ENCODE measurements at regions of chr19 and their contacts with region 1.

Region 1: DNA sequence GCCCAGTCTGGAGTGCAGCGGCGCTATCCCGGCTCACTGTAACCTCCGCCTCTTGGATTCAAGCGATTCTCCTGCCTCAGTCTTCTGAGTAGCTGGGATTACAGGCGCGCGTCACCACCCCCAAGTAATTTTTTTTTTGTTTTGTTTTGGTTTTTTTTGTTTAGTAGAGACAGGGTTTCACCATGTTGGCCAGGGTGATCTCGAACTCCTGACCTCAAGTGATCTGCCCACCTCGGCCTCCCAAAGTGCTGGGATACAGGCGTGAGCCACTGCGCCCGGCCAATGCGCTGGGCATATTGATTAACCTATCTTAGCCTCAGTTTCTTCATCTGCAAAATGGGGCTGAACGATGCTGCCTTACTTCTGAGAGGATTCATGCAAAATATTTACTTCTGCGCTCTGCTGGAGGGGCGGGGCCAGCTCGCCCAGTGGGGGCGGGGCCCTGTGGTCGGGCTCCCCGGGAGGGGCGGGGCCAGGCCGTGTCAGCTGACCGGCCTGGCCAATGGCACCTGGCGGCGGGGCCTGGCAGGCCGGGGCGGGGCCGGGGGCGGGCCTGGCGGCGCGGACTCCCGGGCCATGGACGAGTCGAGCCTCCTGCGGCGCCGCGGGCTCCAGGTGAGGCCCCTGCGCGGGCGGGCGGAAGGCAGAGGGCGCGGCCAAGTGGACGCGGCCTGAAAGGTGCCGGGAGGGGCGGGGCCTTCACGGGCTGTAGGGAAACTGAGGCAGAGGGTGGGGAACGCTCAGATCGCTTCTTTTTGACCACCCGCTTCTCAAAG is at the start of gene MAST3:
- DNase-seq: peak; percentile 96
- H3K4me3 ChIP-seq: peak within 1 kb of the TSS; percentile 77
- H3K27ac ChIP-seq: peak within 1 kb of the TSS; percentile 90
- H3K4me1 ChIP-seq: peaks cover 61% of the 10 kb centered on the region
- CTCF ChIP-seq: no peak
- total RNA-seq, gene MAST3: 14.3 and 14.8 TPM in 2 replicates

Region 2: GRCh38 chr19:17755977-17756670 is 341.3 kb before region 1 on chr19:
- CTCF ChIA-PET with region 1: no interaction called
- POLR2A ChIA-PET with region 1: no interaction called
- intact Hi-C with region 1: loop called (anchors 5 kb)
- DNase-seq: peak; percentile 91
- H3K4me3 ChIP-seq: peak overlapping the region; percentile 54
- H3K27ac ChIP-seq: peak overlapping the region; percentile 93
- H3K4me1 ChIP-seq: peaks cover 70% of the 10 kb centered on the region
- CTCF ChIP-seq: no peak

Region 3: DNA sequence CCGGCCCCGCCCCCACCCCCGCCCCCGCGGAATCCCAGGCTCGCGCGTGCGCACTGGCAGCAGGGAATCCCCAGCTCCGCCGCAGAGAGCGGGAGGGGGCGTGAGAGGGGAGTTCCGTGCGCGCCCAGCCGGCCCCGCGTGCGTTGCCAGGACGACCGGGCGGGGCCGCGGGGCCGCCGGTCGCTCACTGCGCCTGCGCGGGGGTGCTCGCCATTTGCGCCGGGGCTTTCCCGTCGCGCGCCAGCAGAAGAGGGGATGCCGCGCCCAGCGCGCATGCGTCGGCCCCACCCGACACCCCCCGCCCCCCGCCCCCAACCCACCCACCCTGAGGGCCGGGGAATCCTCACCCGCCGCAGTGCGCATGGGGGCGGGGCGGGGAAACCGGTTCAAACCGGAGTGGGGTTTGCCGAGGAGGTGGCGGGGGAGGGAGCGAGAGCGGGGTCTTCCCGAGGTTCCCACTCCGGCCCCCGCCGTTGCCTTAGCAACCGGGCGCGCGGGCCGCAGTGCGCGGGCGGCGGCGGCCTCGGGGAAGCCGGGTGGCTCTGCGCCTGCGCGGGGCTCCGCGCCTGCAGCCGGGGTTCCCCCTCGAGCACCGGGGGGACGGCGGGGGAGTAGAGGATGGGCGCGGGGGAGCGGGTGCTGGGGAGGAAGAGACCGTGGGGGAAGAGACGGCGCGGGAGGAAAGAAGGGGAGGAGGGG is 149.4 kb before region 1 on chr19:
- CTCF ChIA-PET with region 1: no interaction called
- POLR2A ChIA-PET with region 1: no interaction called
- intact Hi-C with region 1: loop called (anchors 10 kb)
- DNase-seq: peak; percentile 98
- H3K4me3 ChIP-seq: peak overlapping the region; percentile 65
- H3K27ac ChIP-seq: peak overlapping the region; percentile 25
- H3K4me1 ChIP-seq: peaks cover 42% of the 10 kb centered on the region
- CTCF ChIP-seq: no peak

Region 4: GRCh38 chr19:18317918-18318841 is 220.8 kb after region 1 on chr19:
- CTCF ChIA-PET with region 1: no interaction called
- POLR2A ChIA-PET with region 1: no interaction called
- intact Hi-C with region 1: no loop called
- DNase-seq: no peak
- H3K4me3 ChIP-seq: no peak overlapping the region
- H3K27ac ChIP-seq: no peak overlapping the region
- H3K4me1 ChIP-seq: peaks cover 29% of the 10 kb centered on the region
- CTCF ChIP-seq: no peak

Region 5: DNA sequence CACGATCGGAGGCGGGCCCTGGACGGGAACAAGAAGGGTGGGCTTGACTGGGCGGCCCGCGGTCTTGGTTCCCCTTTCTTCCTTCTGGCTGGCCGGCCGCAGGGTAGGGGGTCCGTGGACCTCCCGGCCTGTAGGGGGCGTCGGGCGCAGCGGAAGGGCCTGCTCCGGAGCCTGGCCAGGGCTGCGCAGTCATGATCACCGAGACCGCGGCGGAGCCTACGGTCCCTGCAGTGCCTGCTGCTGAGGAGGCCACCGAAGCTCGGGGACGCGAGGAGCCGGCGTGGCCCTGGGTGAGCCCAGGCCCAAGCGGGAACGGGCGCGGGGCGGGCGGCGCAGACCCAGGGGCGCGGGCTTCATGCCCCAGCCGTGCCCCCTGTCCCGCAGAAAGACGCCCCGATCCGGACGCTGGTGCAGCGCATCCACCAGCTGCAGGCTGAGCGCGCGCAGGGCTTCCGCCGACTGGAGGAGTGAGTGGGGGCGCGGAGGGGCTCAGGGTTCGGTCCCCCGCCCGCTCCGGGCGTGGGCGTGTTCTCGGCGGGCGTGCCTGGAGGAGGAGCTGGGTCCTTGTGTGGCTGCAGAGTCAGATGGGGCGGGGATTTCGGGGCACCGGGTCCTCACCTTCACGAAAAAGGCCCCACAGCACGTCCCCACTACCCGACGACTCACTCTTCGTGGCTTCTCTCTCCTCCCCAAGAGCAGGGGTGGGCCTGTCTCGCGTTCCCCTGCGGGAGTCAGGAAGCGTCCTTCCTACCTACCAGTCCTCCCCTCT is 491.4 kb after region 1 on chr19 and contains the start of gene REX1BD:
- CTCF ChIA-PET with region 1: no interaction called
- POLR2A ChIA-PET with region 1: no interaction called
- intact Hi-C with region 1: no loop called
- DNase-seq: peak; percentile 94
- H3K4me3 ChIP-seq: peak within 1 kb of the TSS; percentile 68
- H3K27ac ChIP-seq: peak within 1 kb of the TSS; percentile 70
- H3K4me1 ChIP-seq: peaks cover 51% of the 10 kb centered on the region
- CTCF ChIP-seq: peak; percentile 92
- total RNA-seq, gene REX1BD: 122 and 126 TPM in 2 replicates

Measured in OCI-LY7 (cell line).